MCF 10A (cell line): ENCODE measurements at regions of chr2 and their contacts with region 1.

Region 1: DNA sequence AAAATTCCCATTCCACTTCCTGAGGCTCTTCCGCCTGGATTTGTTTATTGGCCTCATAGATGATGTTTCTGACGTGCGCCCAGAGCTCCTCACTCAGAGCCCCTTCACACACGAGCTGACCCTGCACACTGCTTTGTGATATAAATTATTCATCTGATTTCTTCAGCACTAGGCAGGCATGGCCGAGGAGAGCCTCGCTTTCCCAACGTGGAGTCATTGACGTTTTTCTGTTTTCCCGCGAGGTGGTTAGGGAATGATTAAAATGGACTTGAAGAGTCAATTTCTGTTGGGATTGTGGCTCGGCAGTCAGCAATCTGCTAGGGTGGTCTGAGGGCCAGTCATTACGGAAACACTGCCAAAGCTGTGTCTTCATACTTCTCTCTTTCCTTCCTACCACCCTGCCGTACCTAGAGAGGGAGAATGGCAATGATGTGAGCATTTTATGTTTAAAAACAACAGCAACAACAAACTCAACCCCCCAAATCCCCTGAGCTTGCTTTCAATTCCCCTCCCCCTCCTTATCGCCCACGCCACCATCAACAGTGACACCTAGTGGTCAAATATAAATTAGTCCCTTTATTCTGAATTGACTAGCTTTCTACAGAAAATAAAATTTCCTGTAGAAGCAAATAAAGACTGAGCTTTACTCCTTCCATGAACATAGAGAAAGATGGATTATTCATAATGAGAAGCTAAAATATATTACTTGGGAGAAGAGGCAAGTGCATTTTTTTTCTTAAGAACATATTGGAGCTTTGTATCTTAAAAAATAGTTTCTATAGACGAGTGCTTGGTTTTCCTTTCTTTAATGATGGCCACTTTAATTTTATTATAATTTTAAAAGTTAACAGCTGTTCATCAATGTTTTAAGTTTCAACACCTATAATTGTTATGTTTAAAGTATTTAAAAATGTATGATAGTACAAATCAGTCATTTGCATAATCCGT is 285.1 kb downstream of the MTX2 start:
- DNase-seq: peak; percentile 63
- H3K4me3 Mint-ChIP-seq: peak overlapping the region; percentile 58
- H3K27ac Mint-ChIP-seq: no peak overlapping the region
- H3K4me1 Mint-ChIP-seq: peaks cover 28% of the 10 kb centered on the region
- H3K27me3 Mint-ChIP-seq: no peaks in the 10 kb centered on the region
- CTCF ChIP-seq: peak; percentile 83

Region 2: DNA sequence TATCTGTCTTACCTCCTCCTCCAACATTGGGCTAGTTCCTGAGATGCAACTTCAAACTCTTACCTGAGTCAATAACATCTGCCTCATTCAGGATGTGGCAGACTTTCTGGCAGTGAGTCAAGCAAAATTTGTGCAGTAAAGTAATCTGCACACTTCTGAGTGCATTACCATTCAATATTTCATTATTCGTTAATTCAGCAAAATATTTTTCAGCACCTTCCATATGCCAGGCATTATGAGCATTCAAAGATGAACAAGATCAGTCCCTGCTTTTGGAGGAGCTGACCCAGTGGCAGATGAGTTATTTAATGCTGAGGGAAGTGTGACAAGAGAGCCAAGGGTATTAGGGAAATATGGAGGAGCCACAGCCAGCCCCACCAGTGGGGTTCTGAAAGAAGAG is 892.0 kb before region 1 on chr2:
- CTCF ChIA-PET with region 1: no interaction called
- POLR2A ChIA-PET with region 1: no interaction called
- intact Hi-C with region 1: no loop called
- DNase-seq: no peak
- H3K4me3 Mint-ChIP-seq: no peak overlapping the region
- H3K27ac Mint-ChIP-seq: no peak overlapping the region
- H3K4me1 Mint-ChIP-seq: no peaks in the 10 kb centered on the region
- H3K27me3 Mint-ChIP-seq: peaks cover 66% of the 10 kb centered on the region
- CTCF ChIP-seq: no peak

Region 3: DNA sequence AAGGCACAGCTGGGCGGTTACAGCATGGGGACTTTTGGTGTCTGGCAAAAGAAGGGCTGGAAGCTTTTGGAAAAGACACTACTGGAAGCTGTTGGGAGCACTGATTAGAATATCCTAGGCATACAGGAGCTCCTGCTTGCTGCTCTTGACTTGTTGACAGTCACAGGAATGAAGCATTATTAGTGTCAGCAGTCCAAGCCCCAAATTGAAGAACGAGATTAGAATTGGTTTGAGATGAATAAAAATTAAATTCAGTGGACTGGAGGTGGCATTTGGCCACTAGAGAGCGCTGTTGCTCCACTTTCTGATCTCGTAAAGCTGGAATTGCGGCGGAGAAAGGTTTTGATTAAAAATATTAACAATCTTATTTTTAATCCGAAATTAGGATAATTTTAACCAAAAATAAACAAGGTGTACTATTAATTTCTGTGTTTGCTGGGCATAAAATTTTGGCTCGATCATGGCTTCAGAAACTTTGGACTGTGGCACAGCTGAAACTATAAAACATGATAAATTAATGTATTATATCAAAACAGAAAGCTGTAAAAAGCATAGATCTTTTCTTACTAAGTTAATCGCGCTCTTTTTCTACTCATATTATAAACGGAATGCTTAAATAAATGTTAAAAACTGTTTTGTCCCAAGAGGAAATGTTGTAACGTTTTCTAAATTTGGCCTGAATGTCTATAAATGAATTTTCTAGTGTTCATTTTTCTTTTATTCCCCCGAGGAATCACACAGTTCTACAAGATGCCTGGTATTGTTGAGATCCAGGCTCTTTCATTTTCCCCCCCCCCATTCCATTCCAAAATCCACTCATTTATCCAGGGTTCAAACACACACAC is 427.2 kb before region 1 on chr2:
- CTCF ChIA-PET with region 1: interaction called, 26 read pairs
- POLR2A ChIA-PET with region 1: no interaction called
- intact Hi-C with region 1: no loop called
- DNase-seq: peak; percentile 63
- H3K4me3 Mint-ChIP-seq: no peak overlapping the region
- H3K27ac Mint-ChIP-seq: no peak overlapping the region
- H3K4me1 Mint-ChIP-seq: no peaks in the 10 kb centered on the region
- H3K27me3 Mint-ChIP-seq: peaks cover 11% of the 10 kb centered on the region
- CTCF ChIP-seq: peak; percentile 76

Region 4: GRCh38 chr2:176161819-176162626 is 392.4 kb before region 1 on chr2:
- CTCF ChIA-PET with region 1: interaction called, 10 read pairs
- POLR2A ChIA-PET with region 1: no interaction called
- intact Hi-C with region 1: no loop called
- DNase-seq: no peak
- H3K4me3 Mint-ChIP-seq: no peak overlapping the region
- H3K27ac Mint-ChIP-seq: no peak overlapping the region
- H3K4me1 Mint-ChIP-seq: no peaks in the 10 kb centered on the region
- H3K27me3 Mint-ChIP-seq: no peaks in the 10 kb centered on the region
- CTCF ChIP-seq: no peak

Region 5: DNA sequence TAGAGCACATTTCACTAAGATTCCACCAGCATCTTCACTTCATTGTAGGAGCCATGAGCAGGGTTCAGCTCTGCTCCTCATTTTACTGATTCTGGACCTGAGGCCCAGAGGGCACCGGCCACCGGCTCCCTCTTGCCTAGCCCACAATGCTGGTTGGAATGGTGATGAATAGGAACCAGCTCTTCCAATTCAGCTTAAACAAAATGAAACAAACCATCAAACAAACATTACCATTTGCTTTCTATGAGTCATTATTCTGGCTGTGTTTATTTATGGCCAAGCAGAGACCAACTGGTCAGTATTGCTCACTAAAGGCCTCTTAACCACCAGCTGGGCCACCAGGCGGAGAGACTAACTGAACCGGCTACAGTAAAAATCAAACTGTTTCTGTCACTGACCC is 108.4 kb before region 1 on chr2:
- CTCF ChIA-PET with region 1: interaction called, 72 read pairs
- POLR2A ChIA-PET with region 1: no interaction called
- intact Hi-C with region 1: no loop called
- DNase-seq: no peak
- H3K4me3 Mint-ChIP-seq: no peak overlapping the region
- H3K27ac Mint-ChIP-seq: no peak overlapping the region
- H3K4me1 Mint-ChIP-seq: no peaks in the 10 kb centered on the region
- H3K27me3 Mint-ChIP-seq: no peaks in the 10 kb centered on the region
- CTCF ChIP-seq: no peak

Region 6: DNA sequence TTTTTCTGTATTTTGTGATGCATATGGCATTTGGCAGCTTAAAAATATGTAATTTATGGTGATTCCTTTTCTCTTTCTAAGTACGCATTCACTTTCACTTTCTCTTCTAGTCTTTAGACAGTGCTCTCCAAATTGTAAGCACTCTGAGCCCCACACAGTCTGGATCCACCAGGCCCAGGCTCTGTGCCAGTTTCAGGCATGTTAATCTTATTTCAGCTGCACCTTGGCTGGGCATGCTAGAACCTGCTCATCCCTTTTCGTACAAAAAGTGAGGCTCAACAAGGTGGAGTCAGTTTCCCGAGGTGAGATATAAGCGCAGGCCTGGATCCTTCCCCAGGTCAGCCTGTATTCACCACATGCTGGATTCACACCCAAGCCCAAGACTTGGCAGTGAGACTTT is 81.2 kb before region 1 on chr2:
- CTCF ChIA-PET with region 1: interaction called, 15 read pairs
- POLR2A ChIA-PET with region 1: interaction called, 39 read pairs
- intact Hi-C with region 1: no loop called
- DNase-seq: peak; percentile 97
- H3K4me3 Mint-ChIP-seq: peak overlapping the region; percentile 73
- H3K27ac Mint-ChIP-seq: peak overlapping the region; percentile 87
- H3K4me1 Mint-ChIP-seq: peaks cover 16% of the 10 kb centered on the region
- H3K27me3 Mint-ChIP-seq: no peaks in the 10 kb centered on the region
- CTCF ChIP-seq: no peak

Region 7: GRCh38 chr2:176638167-176639015 is 84.0 kb after region 1 on chr2:
- CTCF ChIA-PET with region 1: interaction called, 32 read pairs
- POLR2A ChIA-PET with region 1: interaction called, 7 read pairs
- intact Hi-C with region 1: loop called (anchors 1 kb)
- DNase-seq: peak; percentile 61
- H3K4me3 Mint-ChIP-seq: peak overlapping the region; percentile 74
- H3K27ac Mint-ChIP-seq: no peak overlapping the region
- H3K4me1 Mint-ChIP-seq: peaks cover 6% of the 10 kb centered on the region
- H3K27me3 Mint-ChIP-seq: no peaks in the 10 kb centered on the region
- CTCF ChIP-seq: peak; percentile 85

Region 8: GRCh38 chr2:176845694-176846093 is 291.3 kb after region 1 on chr2:
- CTCF ChIA-PET with region 1: no interaction called
- POLR2A ChIA-PET with region 1: no interaction called
- intact Hi-C with region 1: no loop called
- DNase-seq: no peak
- H3K4me3 Mint-ChIP-seq: no peak overlapping the region
- H3K27ac Mint-ChIP-seq: no peak overlapping the region
- H3K4me1 Mint-ChIP-seq: no peaks in the 10 kb centered on the region
- H3K27me3 Mint-ChIP-seq: peaks cover 6% of the 10 kb centered on the region
- CTCF ChIP-seq: no peak